Activated CD8-positive, alpha-beta memory T cell treated with anti-CD3 and anti-CD28 coated beads, Interleukin-2, amount 10 ng/mL, durations not matched to agents 7 days and 5 days (primary cell): ENCODE measurements at regions of chr9 and their contacts with region 1.

Region 1: DNA sequence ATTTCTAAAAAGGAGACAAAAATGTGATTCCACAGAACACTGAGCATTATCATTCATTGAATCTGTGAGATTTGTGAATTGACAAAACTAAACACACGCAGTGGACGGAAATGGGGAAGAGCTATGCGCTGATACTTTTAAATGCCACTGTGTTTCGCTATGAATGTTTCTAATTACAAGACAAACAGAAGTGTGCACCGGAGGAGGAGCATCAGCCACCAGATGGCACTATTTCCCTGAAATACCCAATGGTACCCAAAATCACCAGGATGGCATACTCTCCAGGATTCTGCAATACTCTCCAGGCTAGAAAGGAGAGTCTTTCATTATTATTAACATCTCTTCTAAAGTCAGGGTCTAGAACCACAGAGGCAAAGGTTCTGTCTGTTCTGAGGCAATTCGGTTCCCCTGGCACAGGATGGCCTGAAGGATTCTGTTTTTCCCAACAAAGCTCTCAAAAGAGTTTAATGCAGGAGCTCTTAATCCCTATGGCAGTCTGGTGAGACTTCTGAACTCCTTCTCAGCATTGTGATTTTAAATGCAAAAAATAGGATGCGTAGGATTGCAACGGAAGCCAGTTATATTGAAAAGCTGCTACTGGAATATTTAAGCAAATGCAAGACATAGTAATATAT is 13.8 kb upstream of the PUM3 start:
- DNase-seq: peak; percentile 81
- ATAC-seq: peak; percentile 94
- H3K4me3 Mint-ChIP-seq: no peak overlapping the region
- H3K27ac Mint-ChIP-seq: no peak overlapping the region
- H3K4me1 Mint-ChIP-seq: peaks cover 6% of the 10 kb centered on the region
- H3K27me3 Mint-ChIP-seq: peaks cover 45% of the 10 kb centered on the region

Region 2: DNA sequence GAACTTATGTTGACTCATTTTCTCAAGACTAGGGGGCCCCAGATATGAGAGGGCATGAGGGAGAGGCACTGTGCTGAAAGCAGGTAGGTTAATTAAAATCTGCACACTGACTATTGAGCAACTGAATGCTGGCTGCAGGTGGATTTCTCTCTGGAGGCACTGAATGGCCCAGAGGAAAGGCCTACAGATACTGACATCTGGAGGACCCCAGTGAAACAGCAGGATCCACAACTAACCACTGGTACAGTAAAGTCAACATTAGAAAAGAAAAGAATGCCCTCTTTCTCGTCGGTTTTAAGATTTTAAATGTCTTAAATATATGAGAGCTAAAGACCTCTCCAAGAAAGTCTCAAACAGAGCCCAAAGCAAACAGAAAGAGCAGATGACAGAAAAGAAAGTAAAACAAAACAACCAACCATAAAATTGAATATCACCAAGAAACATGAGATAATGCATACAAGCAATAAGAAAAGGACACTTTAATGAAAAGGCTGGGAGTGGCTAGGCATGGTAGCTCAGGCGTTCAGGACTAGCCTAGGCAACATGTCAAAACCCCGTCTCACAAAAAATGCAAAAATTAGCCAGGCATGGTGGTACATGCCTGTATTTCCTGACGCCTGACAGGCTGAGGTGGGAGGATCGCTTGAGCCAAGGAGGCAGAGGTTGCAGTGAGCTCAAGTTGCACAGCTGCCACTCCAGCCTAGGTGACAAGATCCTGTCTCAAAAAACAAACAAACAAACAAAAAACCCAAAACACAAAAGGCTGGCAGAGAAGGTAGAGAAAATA is 57.1 kb before region 1 on chr9:
- CTCF ChIA-PET with region 1: no interaction called
- DNase-seq: no peak
- ATAC-seq: no peak
- H3K4me3 Mint-ChIP-seq: no peak overlapping the region
- H3K27ac Mint-ChIP-seq: no peak overlapping the region
- H3K4me1 Mint-ChIP-seq: peaks cover 4% of the 10 kb centered on the region
- H3K27me3 Mint-ChIP-seq: no peaks in the 10 kb centered on the region

Region 3: DNA sequence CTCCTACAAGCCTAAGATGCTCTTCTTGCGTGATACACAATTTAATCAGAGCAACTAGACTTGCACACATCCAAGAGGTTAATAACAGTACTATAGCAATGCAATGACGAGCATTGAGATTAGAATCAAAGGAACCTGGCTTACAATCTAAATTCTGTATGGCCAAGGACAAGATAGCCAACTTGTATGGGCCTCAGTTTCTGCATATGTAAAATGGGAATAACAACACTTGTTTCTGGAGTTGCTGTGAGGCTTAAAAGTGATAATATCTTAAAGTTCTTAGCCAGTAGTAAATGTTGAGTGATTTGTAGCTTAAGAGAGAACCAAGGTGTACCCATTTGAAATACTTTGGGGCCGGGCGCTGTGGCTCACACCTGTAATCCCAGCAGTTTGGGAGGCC is 11.6 kb before region 1 on chr9:
- CTCF ChIA-PET with region 1: interaction called, 23 read pairs
- DNase-seq: no peak
- ATAC-seq: no peak
- H3K4me3 Mint-ChIP-seq: no peak overlapping the region
- H3K27ac Mint-ChIP-seq: no peak overlapping the region
- H3K4me1 Mint-ChIP-seq: peaks cover 16% of the 10 kb centered on the region
- H3K27me3 Mint-ChIP-seq: no peaks in the 10 kb centered on the region

Region 4: DNA sequence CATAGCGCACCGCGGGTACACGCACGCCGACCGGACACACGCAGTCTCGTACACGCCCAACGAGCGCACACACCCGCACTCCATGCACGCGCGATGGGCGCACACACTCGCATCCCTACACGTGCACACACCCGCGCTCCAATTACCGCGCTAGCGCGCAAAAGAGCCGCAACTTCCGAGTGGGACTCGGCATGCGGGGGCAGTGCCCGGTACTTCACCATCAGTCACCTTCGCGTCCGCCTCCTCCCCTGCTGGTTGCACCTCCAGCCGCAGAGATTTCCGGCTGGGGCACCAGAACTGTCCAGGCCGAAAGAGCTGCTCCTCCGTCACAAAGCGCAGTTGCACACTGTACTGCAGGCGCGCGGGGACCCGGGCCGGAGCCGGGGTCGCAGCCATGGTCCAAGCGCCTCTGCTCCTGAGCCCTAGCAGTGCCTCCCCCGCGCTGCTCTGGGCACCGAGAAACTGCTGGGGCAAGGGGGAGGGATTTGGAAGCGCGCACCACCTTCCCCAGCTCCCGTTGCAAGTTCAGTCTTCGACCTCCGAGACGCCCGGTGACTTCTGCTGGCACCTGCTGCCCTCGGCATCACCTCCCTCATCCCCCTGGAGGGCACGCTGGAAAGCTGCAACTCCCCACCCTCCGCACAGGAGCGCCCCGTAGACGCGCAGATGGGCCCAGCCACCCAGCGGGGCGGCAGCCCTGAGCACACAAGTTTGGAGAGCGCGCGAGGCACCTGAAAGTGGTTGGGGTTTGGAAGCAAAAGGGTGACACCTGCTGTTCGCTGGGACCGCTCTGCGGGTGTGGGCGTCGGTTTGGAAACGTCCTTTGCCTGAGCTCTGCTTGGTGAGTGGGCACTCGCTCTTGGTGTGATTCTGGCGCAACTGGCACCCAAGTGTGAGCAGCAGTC is 323.6 kb after region 1 on chr9:
- CTCF ChIA-PET with region 1: interaction called, 15 read pairs
- DNase-seq: peak; percentile 55
- ATAC-seq: peak; percentile 73
- H3K4me3 Mint-ChIP-seq: peak overlapping the region; percentile 23
- H3K27ac Mint-ChIP-seq: no peak overlapping the region
- H3K4me1 Mint-ChIP-seq: peaks cover 6% of the 10 kb centered on the region
- H3K27me3 Mint-ChIP-seq: peaks cover 55% of the 10 kb centered on the region

Region 5: GRCh38 chr9:3441197-3441816 is 583.6 kb after region 1 on chr9:
- CTCF ChIA-PET with region 1: interaction called, 10 read pairs
- DNase-seq: peak; percentile 65
- ATAC-seq: peak; percentile 80
- H3K4me3 Mint-ChIP-seq: no peak overlapping the region
- H3K27ac Mint-ChIP-seq: no peak overlapping the region
- H3K4me1 Mint-ChIP-seq: no peaks in the 10 kb centered on the region
- H3K27me3 Mint-ChIP-seq: no peaks in the 10 kb centered on the region